ENCODE measurements at regions of chr15 and their contacts with region 1.

Region 1: GRCh38 chr15:81301815-81302399 is 22.0 kb downstream of the STARD5 start:
- DNase-seq: no peak
- ATAC-seq: peak; percentile 57
- H3K4me3 Mint-ChIP-seq: peak overlapping the region; percentile 100
- H3K27ac Mint-ChIP-seq: peak overlapping the region; percentile 98
- H3K4me1 Mint-ChIP-seq: peaks cover 52% of the 10 kb centered on the region
- H3K27me3 Mint-ChIP-seq: no peaks in the 10 kb centered on the region

Region 2: DNA sequence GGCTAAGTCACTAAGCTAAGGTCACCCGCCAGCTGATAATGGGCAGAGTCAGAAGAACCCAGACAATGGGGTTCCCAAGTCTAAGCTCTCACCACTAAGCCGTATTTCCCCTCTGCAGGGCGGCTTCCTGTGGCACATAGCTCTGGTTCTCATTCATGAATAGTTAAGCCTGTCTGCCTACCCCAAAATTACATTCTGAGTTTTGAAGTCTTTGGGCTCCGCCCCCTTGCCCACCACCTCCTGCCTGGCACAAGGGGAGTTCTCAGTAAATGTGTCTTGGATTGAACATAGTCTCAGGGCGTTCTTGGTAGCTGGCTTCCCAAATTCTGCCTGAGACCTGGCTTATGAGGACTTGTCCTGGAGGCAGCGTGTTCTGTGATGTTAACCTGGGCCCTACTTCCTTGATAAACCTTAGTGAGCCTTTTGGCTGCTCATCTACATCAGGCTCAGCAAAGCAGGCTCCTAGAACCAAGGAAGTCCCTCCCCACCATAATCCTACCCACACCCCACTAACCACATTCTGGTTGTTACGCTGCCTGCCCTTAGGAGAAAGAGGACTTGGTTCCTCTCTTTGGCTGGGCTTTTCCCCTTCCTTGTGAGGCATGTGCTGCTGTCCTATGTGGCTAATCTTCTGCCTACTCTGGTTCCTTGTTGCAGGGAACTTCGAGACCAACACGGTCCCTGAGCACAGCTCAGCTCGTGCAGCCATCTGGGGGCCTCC is 32.9 kb before region 1 on chr15:
- POLR2A ChIA-PET with region 1: interaction called, 10 read pairs
- DNase-seq: no peak
- ATAC-seq: peak; percentile 57
- H3K4me3 Mint-ChIP-seq: peak overlapping the region; percentile 59
- H3K27ac Mint-ChIP-seq: peak overlapping the region; percentile 83
- H3K4me1 Mint-ChIP-seq: peaks cover 32% of the 10 kb centered on the region
- H3K27me3 Mint-ChIP-seq: peaks cover 10% of the 10 kb centered on the region

Region 3: GRCh38 chr15:81274931-81275707 is 26.8 kb before region 1 on chr15:
- POLR2A ChIA-PET with region 1: interaction called, 44 read pairs
- DNase-seq: peak; percentile 76
- ATAC-seq: peak; percentile 89
- H3K4me3 Mint-ChIP-seq: peak overlapping the region; percentile 22
- H3K27ac Mint-ChIP-seq: peak overlapping the region; percentile 72
- H3K4me1 Mint-ChIP-seq: peaks cover 15% of the 10 kb centered on the region
- H3K27me3 Mint-ChIP-seq: no peaks in the 10 kb centered on the region

Region 4: DNA sequence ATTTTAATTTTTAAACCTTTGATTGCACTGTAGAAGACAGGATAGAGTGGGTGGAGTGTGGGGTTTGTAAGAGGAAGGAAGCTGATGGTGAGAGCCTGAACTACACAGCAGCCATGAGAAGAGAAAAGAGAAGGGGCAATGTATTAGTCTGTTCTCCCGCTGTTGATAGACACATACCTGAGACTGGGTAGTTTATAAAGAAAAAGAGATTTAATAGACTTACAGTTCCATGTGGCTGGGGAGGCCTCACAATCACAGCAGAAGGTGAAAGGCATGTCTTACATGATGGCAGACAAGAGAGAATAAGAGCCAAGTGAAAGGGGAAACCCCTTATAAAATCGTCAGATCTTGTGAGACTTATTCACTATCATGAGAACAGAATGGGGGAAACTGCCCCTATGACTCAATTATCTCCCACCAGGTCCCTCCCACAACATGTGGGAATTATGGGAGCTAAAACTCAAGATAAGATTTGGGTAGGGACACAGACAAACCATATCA is 15.2 kb before region 1 on chr15:
- POLR2A ChIA-PET with region 1: interaction called, 97 read pairs
- DNase-seq: no peak
- ATAC-seq: peak; percentile 87
- H3K4me3 Mint-ChIP-seq: peak overlapping the region; percentile 59
- H3K27ac Mint-ChIP-seq: peak overlapping the region; percentile 87
- H3K4me1 Mint-ChIP-seq: peaks cover 55% of the 10 kb centered on the region
- H3K27me3 Mint-ChIP-seq: no peaks in the 10 kb centered on the region

Region 5: GRCh38 chr15:81312790-81313543 is 11.1 kb after region 1 on chr15:
- POLR2A ChIA-PET with region 1: interaction called, 97 read pairs
- DNase-seq: no peak
- ATAC-seq: no peak
- H3K4me3 Mint-ChIP-seq: no peak overlapping the region
- H3K27ac Mint-ChIP-seq: peak overlapping the region; percentile 54
- H3K4me1 Mint-ChIP-seq: peaks cover 41% of the 10 kb centered on the region
- H3K27me3 Mint-ChIP-seq: no peaks in the 10 kb centered on the region

Region 6: DNA sequence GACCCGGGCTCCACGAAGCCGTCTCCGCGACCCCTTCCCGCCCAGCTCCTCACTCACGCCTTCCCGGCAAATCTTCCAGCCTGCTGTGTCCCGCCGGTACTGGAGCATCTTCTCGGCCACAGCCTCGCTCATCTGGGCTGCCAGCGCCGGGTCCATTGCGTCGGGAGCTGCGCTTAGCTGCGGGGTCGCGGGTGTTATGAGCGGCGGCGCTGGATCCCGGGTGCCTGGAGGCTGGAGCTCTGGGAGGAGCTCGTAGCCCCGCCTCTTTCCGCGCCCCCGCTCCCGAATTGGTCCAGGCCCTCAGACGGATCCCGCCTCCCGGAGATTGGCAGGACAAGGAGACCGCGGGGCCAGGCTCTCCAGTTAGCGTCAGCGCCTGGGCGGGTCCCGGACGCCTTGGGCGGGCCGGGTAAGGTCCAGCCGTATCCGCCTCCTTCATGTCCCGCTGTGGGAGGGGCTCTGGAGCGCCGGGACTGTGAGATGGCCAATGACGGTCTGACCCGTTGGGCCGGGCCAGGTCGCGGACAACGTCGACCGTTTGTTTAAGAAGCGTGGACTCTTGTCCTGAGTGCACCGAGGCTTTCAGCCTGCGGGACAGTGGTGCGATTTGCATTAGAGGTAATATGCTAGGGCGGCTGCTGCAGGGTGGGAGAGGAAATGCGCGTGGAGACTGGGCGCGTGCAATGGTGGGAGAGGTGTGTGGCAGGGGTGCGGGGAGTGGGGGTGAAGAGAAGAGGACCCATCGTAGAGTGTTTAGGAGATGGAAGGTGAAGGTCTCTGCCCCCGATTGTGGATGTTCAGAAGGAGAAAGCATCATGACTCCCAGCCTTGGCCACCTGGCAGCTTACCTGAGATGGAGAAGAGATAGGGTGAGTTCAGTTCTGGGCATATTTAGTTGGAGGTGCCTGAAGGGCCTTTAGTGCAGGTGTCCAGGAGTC is 22.3 kb after region 1 on chr15 and contains the start of gene STARD5:
- POLR2A ChIA-PET with region 1: interaction called, 26 read pairs
- DNase-seq: peak; percentile 96
- ATAC-seq: peak; percentile 100
- H3K4me3 Mint-ChIP-seq: peak within 1 kb of the TSS; percentile 96
- H3K27ac Mint-ChIP-seq: peak within 1 kb of the TSS; percentile 91
- H3K4me1 Mint-ChIP-seq: peaks cover 25% of the 10 kb centered on the region
- H3K27me3 Mint-ChIP-seq: no peaks in the 10 kb centered on the region
- total RNA-seq, gene STARD5: 5.4 to 7.2 TPM